Activated B cell treated with CpG ODN at 0.5 μM for 24 hours (primary cell): ENCODE measurements at regions of chr19 and their contacts with region 1.

Region 1: DNA sequence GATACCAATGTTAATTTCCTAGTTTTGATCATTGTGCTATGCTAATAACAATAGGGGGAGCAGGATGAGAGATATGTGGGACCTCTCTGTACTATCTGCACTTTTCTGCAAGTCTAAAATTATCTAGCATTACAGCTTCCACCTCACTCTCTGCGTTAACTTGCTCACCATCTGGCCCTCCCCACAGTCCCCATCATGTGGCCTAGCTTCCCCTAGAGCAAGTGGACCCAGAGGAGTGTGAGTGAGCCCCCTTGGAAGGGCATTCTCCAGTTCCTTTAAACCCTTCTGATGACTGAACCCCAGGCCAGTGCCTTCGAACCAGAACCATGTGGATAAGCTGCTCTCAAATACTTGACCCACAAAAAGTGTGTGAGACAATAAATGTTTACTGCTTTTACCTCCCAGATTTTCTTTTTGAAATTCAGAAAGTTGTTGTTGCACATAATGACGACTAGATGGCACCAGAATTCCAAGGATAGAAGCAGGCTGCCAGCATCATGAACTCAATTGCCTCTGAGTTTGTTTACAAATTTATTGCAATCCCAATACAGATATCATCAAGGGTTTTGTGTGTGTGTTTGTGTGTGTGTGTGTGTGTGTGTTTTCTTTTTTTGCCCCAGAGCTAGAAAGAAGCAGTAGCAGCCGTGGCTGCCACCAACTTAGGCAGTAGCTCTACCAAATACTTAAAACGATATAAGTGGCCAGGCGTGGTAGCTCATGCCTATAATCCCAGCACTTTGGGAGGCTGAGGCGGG is 49.0 kb upstream of the ZNF780A start:
- DNase-seq: no peak
- ATAC-seq: peak; percentile 47
- H3K4me3 Mint-ChIP-seq: no peak overlapping the region
- H3K27ac Mint-ChIP-seq: no peak overlapping the region
- H3K4me1 Mint-ChIP-seq: peaks cover 33% of the 10 kb centered on the region
- H3K27me3 Mint-ChIP-seq: peaks cover 7% of the 10 kb centered on the region
- CTCF ChIP-seq: no peak

Region 2: DNA sequence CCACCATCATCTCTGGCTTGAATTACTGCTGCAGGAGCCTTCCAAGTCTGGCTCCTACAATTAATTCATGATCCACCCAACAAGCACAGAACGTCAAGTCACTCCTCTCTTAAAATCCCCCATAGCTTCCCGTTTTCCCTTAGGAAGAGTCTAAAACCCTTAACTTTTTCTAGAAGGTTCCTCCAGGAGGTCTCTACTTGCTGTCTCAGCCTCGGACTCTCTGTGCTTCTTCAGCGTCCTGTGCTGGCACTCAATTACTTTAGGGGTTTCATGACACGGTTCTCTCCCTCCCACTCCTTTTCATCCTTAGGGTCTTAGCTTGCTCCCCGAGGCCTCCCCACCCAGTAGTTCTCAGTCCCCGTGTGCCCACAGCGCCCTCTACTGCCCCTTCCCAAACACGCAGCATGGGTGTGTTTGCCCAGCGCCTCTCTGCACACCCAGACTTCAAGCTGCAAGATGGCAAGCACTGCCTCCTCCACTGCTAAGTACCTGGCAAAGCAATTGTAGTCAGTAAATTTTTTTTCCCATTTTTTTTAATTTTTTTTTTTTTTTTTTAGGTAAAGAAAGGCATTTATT is 25.7 kb after region 1 on chr19:
- CTCF ChIA-PET with region 1: interaction called, 26 read pairs
- POLR2A ChIA-PET with region 1: interaction called, 4 read pairs
- intact Hi-C with region 1: loop called (anchors 1 kb)
- DNase-seq: peak; percentile 39
- ATAC-seq: peak; percentile 66
- H3K4me3 Mint-ChIP-seq: peak overlapping the region; percentile 17
- H3K27ac Mint-ChIP-seq: peak overlapping the region; percentile 42
- H3K4me1 Mint-ChIP-seq: peaks cover 29% of the 10 kb centered on the region
- H3K27me3 Mint-ChIP-seq: no peaks in the 10 kb centered on the region
- CTCF ChIP-seq: no peak

Region 3: DNA sequence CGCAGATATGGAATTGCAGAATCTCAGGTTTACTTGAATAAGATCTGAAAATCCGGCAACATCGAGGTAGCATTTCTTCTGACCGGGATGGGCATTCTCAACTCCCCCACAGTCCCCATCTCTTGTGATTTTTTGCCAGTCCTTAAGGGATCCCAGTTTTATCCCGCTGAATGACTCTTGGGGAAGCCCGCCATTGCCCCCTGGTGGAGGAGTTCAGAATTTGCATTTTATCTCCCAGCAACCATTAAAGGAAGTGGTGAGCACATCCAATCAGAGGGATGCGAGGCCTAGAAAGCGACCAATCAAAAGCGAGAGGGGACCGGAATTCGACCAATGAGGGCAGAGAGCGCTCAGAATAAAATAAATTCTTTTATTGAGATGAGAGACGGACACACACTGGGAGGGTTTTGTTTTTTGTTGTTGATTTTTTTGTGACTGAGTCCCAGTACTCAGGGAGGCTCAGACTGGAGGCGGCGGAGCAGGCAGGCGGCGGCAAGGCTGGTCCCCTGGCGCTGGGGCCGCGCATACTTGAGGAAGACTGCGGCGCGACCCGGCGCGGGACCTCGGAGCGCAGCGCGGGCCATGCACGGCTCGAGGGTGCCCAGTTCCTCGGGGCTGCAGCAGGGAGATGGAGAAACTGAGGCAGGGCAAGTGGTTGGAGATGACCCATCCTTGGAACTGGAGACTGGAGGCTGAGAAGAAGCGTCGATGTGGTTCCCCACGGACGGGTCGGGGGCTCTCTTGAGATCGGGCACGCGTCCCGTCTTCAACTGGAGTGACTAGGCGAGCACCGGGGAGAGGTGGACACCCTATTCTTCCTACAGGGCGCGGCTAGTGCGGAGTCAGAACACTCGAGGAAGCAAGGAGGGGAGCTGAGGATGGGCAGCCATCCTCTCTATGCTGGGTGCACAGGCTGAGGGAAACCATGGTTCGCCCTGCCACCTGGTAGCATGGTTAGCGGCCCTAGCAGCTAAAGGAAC is 82.4 kb after region 1 on chr19:
- CTCF ChIA-PET with region 1: interaction called, 29 read pairs
- POLR2A ChIA-PET with region 1: no interaction called
- intact Hi-C with region 1: loop called (anchors 1 kb)
- DNase-seq: peak; percentile 50
- ATAC-seq: peak; percentile 93
- H3K4me3 Mint-ChIP-seq: no peak overlapping the region
- H3K27ac Mint-ChIP-seq: peak overlapping the region; percentile 56
- H3K4me1 Mint-ChIP-seq: peaks cover 22% of the 10 kb centered on the region
- H3K27me3 Mint-ChIP-seq: peaks cover 48% of the 10 kb centered on the region
- CTCF ChIP-seq: no peak